ENCODE measurements at regions of chr9 and their contacts with region 1.

Region 1: GRCh38 chr9:34665381-34666250 is 3.2 kb upstream of the CCL27 start:
- DNase-seq: peak; percentile 64 to 83
- H3K4me3 ChIP-seq: peak overlapping the region; percentile 58
- H3K27ac ChIP-seq: no peak overlapping the region
- H3K4me1 ChIP-seq: no peaks in the 10 kb centered on the region
- H3K27me3 ChIP-seq: no peaks in the 10 kb centered on the region
- CTCF ChIP-seq: no peak

Region 2: GRCh38 chr9:34646211-34647083 is 19.2 kb before region 1 on chr9 and contains the start of gene GALT:
- CTCF ChIA-PET with region 1: interaction called, 3 read pairs
- POLR2A ChIA-PET with region 1: interaction called, 3 read pairs
- intact Hi-C with region 1: loop called (anchors 2 kb)
- DNase-seq: peak; percentile 67 to 91
- H3K4me3 ChIP-seq: peak within 1 kb of the TSS; percentile 71
- H3K27ac ChIP-seq: no peak within 1 kb of the TSS
- H3K4me1 ChIP-seq: peaks cover 20% of the 10 kb centered on the region
- H3K27me3 ChIP-seq: no peaks in the 10 kb centered on the region
- CTCF ChIP-seq: peak; percentile 34; the same call in 1 of the 2 replicates
- total RNA-seq, gene GALT: 13.5 and 18.2 TPM in 2 replicates

Region 3: DNA sequence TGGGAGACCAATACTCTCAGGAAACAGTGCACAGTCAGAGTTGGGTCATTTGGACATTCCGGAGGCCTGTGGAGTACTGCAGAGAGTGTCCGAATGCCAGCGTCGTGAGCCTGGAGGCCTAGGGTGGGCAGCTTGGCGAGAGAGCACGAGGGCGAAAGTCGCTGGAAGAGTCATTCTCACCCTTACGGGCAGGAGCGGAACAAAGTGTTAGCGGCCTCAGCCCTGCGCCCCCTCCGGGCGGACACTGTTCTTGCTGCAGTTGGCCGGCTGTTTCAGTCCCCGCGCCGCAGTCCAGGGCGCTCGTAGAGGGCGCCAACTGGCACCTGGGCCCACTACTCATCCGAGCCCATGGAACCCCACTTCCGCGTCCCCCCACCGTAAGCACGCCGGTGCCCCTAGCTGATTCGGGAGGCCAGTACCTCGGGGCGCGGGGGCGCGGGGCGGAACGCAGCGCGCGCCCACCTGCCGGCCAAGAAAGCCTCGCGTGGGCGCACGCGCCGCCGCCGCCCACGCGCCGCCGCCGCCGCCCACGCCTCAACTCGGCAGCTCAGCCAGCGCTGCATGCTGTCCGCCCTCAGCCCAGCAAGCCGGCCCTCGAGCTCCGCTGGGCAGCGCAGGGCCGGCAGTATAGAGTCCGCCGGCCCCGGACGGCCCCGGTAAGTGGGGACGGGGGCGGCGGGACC is 144.0 kb after region 1 on chr9:
- CTCF ChIA-PET with region 1: no interaction called
- POLR2A ChIA-PET with region 1: no interaction called
- intact Hi-C with region 1: no loop called
- DNase-seq: no peak
- H3K4me3 ChIP-seq: no peak overlapping the region
- H3K27ac ChIP-seq: no peak overlapping the region
- H3K4me1 ChIP-seq: no peaks in the 10 kb centered on the region
- H3K27me3 ChIP-seq: peaks cover 34% of the 10 kb centered on the region
- CTCF ChIP-seq: no peak

Region 4: DNA sequence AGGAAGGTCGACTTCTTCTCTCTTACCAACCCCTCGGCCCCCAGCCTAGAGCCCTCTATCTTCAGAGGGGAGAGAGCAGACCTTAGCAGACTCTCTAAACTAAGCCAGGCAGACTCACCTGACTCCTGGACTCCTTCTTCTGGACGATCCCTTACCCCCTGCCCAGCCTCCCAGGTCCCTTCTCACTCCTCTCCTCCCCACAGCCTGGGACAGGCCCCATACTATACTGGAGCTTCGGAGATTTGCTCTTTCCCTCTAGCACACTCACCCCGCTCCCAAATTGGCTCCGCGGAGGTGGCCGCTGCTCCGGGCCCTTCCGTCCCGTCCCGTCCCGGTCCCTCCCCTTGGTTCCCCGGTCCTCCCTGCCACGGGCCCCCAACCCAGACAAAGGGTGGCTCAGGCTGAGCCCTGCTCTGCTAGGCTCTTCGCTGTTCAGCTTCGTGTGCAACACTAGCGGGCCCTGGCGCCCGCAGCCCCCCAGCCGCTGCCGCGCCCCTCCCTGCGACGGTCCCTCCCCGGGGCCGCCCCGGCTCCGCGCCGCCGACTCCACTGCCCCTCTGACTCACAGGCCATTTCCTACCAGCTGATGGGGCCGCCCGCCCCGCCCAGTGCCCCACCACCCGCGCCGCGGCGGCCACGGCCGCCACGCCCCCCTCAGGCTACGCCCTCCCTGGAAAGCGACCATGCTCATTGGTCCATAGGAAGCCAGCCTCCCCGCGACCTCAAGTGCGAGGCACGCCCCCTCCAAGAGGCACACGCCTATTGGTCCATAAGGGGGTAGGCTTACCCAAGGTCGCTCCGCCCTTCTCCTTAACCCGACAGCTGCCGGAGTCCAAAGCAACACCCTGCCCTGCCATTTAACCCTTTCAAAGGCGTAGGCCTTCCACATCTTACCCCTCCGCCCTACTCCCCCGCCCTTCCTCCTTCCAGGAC is 445.7 kb after region 1 on chr9:
- CTCF ChIA-PET with region 1: no interaction called
- POLR2A ChIA-PET with region 1: no interaction called
- intact Hi-C with region 1: loop called (anchors 5 kb)
- DNase-seq: peak; percentile 85 to 88
- H3K4me3 ChIP-seq: peak overlapping the region; percentile 81
- H3K27ac ChIP-seq: no peak overlapping the region
- H3K4me1 ChIP-seq: peaks cover 33% of the 10 kb centered on the region
- H3K27me3 ChIP-seq: no peaks in the 10 kb centered on the region
- CTCF ChIP-seq: no peak

Measured in PC-9 (cell line).